ENCODE measurements at regions of chrX and their contacts with region 1.

Region 1: DNA sequence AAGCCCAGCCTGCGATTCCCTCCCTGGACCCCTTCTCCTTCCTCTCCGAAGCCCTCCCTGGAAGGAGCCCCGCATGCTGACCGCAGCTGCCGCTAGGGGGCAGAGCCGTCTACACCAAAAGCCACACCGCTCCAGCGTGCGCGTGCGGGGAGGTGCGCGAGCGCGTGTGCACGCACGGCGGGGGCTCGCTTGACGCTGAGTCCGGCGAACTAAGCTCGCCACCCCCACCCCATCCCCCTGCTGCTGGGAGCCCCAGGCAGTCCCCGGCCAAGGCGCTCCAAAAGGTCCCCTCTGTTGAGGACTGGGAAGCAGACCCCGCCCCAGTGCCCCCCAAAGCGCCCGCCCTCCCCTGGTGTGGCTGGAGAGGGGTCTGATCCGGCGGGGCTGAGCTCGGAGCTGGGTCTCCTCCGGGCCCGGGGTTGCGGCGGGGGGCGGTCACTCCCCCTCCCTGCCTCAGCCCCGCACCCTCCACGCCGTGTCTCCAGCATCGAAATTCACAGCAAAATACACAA is 11.0 kb upstream of the CCNQ start:
- DNase-seq: peak; percentile 74 to 87 (median 78)
- ATAC-seq: peak; percentile 98
- H3K4me3 ChIP-seq: peak overlapping the region; percentile 23; the same call in 1 of the 2 replicates
- H3K27ac ChIP-seq: no peak overlapping the region
- H3K4me1 ChIP-seq: peaks cover 0 to 21% of the 10 kb centered on the region in 2 experiments; a peak in 2 of 5 replicates
- H3K27me3 ChIP-seq: peaks cover 24 to 45% of the 10 kb centered on the region in 2 experiments
- CTCF ChIP-seq: peak; percentile 77 to 90 (median 84)
- EP300 ChIP-seq: no peak
- POLR2A ChIP-seq: no peak
- RAD21 ChIP-seq: peak; percentile 38 to 69

Region 2: GRCh38 chrX:153554519-153555167 is 55.3 kb before region 1 on chrX:
- CTCF ChIA-PET with region 1: interaction called, 3 read pairs
- POLR2A ChIA-PET with region 1: no interaction called
- in situ Hi-C with region 1: no loop called
- intact Hi-C with region 1: loop called (anchors 5 kb)
- DNase-seq: peak; percentile 68 to 75 (median 68)
- ATAC-seq: peak; percentile 92
- H3K4me3 ChIP-seq: no peak overlapping the region
- H3K27ac ChIP-seq: no peak overlapping the region
- H3K4me1 ChIP-seq: peaks cover 0 to 27% of the 10 kb centered on the region in 2 experiments; a peak in 2 of 5 replicates
- H3K27me3 ChIP-seq: peaks cover 31 to 80% of the 10 kb centered on the region in 2 experiments
- CTCF ChIP-seq: peak; percentile 76 to 87 (median 81)
- EP300 ChIP-seq: no peak
- POLR2A ChIP-seq: no peak
- RAD21 ChIP-seq: peak; percentile 41 to 75

Region 3: DNA sequence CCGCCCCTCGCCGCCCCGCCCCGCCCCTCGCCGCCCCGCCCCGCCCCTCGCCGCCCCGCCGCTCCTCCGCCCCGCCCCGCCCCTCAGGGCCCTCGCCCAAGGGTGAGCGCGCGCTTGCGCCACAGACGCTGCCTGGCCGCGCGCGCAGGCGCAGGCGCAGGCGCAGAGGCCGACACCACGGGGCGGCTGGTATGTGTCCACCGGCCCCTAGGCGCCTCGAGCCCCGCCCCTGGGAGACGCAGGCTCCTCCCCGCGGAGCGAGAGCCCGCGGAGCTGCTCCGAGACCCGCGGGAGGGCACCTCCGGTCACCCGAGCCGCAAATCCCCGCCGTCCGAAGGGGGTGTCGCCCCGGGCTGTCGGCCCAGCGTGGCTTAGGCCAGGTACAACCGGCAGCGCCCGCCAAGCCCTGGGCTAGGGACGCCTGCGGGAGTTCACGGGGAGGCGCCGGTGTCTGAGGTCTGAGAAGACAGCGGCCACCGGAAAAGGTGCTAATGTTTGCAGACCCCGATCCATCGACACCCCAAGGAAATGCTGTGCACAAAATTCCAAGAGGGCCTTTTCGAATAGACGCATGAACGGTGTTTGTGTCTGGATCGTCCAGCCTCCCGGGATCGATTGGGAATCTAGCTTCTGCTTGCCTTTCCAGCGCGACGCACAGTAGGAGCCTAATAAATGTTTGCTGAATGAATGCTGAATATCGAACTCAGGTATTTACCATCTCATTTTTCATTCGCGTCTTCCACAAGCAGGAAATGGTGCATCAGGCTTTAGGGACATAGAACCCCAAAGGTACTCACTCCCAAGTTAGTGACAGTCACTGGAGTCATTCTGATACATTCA is 10.6 kb before region 1 on chrX:
- CTCF ChIA-PET with region 1: no interaction called
- POLR2A ChIA-PET with region 1: interaction called, 12 read pairs
- in situ Hi-C with region 1: no loop called
- intact Hi-C with region 1: no loop called
- DNase-seq: peak; percentile 94 to 96 (median 96)
- ATAC-seq: peak; percentile 97
- H3K4me3 ChIP-seq: peak overlapping the region; percentile 63
- H3K27ac ChIP-seq: peak overlapping the region; percentile 55; the same call in 2 of the 3 replicates
- H3K4me1 ChIP-seq: peaks cover 8 to 22% of the 10 kb centered on the region in 2 experiments; a peak in 4 of 5 replicates
- H3K27me3 ChIP-seq: 0 out of 5 replicates have a peak, but pooled peaks cover 0 to 9% of the 10 kb centered on the region in 2 experiments
- CTCF ChIP-seq: no peak
- EP300 ChIP-seq: no peak
- POLR2A ChIP-seq: peak; percentile 60; the same call in 1 of the 2 replicates
- RAD21 ChIP-seq: no peak

Region 4: DNA sequence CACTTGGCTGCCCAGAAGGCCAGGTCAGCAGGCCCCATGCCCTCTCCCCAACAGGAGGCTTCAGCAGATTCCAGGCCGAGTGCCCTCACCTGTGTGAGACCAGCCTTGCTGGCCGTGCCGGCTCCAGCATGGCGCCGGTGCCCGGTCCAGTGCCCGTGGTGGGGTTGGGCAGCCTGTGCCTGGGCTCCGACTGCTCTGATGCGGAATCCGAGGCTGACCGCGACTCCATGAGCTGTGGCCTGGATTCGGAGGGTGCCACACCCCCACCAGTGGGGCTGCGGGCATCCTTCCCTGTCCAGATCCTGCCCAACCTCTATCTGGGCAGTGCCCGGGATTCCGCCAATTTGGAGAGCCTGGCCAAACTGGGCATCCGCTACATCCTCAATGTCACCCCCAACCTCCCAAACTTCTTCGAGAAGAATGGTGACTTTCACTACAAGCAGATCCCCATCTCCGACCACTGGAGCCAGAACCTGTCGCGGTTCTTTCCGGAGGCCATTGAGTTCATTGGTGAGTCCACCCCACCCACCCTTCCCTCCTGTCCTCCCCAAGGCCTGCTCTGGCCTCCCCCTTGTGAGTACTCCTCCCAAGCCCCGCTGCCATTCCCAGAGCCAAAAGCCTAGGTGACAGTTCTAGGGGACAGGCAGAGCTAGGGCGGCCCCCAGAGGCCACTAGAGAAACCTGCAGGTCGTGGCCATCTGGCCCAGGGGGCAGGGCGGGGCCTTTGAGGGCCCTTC is 39.4 kb after region 1 on chrX:
- CTCF ChIA-PET with region 1: interaction called, 4 read pairs
- POLR2A ChIA-PET with region 1: no interaction called
- in situ Hi-C with region 1: no loop called
- intact Hi-C with region 1: loop called (anchors 5 kb)
- DNase-seq: peak; percentile 52 to 74 (median 61)
- ATAC-seq: peak; percentile 87
- H3K4me3 ChIP-seq: no peak overlapping the region
- H3K27ac ChIP-seq: no peak overlapping the region
- H3K4me1 ChIP-seq: peaks cover 5 to 49% of the 10 kb centered on the region in 2 experiments; a peak in 3 of 5 replicates
- H3K27me3 ChIP-seq: no peaks in the 10 kb centered on the region; a peak in 1 of 5 replicates
- CTCF ChIP-seq: peak; percentile 66 to 90 (median 77)
- EP300 ChIP-seq: no peak
- POLR2A ChIP-seq: no peak
- RAD21 ChIP-seq: peak in 1 of 2 experiments; percentile 64; a peak in 2 of 4 replicates

Region 5: DNA sequence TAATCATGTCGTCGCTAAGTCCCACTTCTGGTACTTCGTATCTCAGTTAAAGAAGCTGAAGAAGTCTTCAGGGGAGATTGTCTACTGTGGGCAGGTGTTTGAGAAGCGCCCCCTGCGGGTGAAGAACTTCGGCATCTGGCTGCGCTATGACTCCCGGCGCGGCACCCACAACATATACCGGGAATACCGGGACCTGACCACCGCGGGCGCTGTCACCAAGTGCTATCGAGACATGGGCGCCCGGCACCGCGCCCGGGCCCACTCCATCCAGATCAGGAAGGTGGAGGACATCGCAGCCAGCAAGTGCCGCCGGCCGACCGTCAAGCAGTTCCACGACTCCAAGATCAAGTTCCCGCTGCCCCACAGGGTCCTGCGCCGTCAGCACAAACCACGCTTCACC is 52.3 kb after region 1 on chrX:
- CTCF ChIA-PET with region 1: interaction called, 3 read pairs
- POLR2A ChIA-PET with region 1: no interaction called
- in situ Hi-C with region 1: loop called (anchors 5 kb)
- intact Hi-C with region 1: loop called (anchors 1 kb)
- DNase-seq: peak in 2 of 4 experiments; percentile 23 to 76
- ATAC-seq: peak; percentile 79
- H3K4me3 ChIP-seq: peak overlapping the region; percentile 29
- H3K27ac ChIP-seq: no peak overlapping the region
- H3K4me1 ChIP-seq: peaks cover 0 to 8% of the 10 kb centered on the region in 2 experiments; a peak in 2 of 5 replicates
- H3K27me3 ChIP-seq: peaks cover 2 to 16% of the 10 kb centered on the region in 2 experiments; a peak in 3 of 5 replicates
- CTCF ChIP-seq: peak; percentile 68 to 78 (median 73)
- EP300 ChIP-seq: no peak
- POLR2A ChIP-seq: no peak
- RAD21 ChIP-seq: peak; percentile 35 to 68

Region 6: DNA sequence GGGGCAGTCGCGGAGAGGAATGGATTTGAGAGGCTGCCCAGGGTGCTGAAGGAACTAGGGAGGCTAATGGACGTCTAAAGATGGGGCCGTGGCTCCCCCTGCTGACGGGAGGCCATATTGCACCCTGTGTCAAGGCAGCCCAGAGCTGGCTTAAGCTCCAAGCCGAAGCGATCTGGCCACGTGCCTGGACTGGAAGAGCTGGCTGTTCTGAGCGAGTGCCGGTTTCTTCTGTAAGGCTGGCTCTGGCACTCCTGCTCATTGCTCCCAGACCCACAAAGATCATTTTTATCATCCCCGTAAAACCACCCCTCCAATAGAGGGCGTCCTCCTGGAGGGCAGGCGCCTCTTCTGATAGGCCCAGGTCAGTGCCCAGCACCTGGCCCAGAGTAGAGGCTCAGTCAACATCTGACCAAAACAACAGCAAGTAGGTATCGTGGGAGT is 58.0 kb after region 1 on chrX:
- CTCF ChIA-PET with region 1: interaction called, 4 read pairs
- POLR2A ChIA-PET with region 1: interaction called, 4 read pairs
- in situ Hi-C with region 1: loop called (anchors 5 kb)
- intact Hi-C with region 1: no loop called
- DNase-seq: peak; percentile 72 to 86 (median 74)
- ATAC-seq: peak; percentile 90
- H3K4me3 ChIP-seq: no peak overlapping the region
- H3K27ac ChIP-seq: no peak overlapping the region
- H3K4me1 ChIP-seq: peaks cover 5 to 43% of the 10 kb centered on the region in 2 experiments; a peak in 4 of 5 replicates
- H3K27me3 ChIP-seq: peaks cover 2 to 18% of the 10 kb centered on the region in 2 experiments; a peak in 3 of 5 replicates
- CTCF ChIP-seq: peak; percentile 82 to 91 (median 89)
- EP300 ChIP-seq: no peak
- POLR2A ChIP-seq: no peak
- RAD21 ChIP-seq: peak; percentile 62 to 76

Region 7: GRCh38 chrX:153708415-153708814 is 98.4 kb after region 1 on chrX:
- CTCF ChIA-PET with region 1: no interaction called
- POLR2A ChIA-PET with region 1: no interaction called
- in situ Hi-C with region 1: no loop called
- intact Hi-C with region 1: loop called (anchors 2 kb)
- DNase-seq: peak; percentile 50 to 89 (median 65)
- ATAC-seq: peak; percentile 98
- H3K4me3 ChIP-seq: no peak overlapping the region
- H3K27ac ChIP-seq: peak overlapping the region; percentile 60; the same call in 2 of the 3 replicates
- H3K4me1 ChIP-seq: peaks cover 3 to 13% of the 10 kb centered on the region in 2 experiments; a peak in 4 of 5 replicates
- H3K27me3 ChIP-seq: no peaks in the 10 kb centered on the region
- CTCF ChIP-seq: peak; percentile 85 to 90 (median 87)
- EP300 ChIP-seq: no peak
- POLR2A ChIP-seq: no peak
- RAD21 ChIP-seq: peak; percentile 69 to 79

Measured in K562 (cell line).